Left cardiac atrium (tissue), 4 donors: ENCODE measurements at regions of chr15 and their contacts with region 1.

Region 1: DNA sequence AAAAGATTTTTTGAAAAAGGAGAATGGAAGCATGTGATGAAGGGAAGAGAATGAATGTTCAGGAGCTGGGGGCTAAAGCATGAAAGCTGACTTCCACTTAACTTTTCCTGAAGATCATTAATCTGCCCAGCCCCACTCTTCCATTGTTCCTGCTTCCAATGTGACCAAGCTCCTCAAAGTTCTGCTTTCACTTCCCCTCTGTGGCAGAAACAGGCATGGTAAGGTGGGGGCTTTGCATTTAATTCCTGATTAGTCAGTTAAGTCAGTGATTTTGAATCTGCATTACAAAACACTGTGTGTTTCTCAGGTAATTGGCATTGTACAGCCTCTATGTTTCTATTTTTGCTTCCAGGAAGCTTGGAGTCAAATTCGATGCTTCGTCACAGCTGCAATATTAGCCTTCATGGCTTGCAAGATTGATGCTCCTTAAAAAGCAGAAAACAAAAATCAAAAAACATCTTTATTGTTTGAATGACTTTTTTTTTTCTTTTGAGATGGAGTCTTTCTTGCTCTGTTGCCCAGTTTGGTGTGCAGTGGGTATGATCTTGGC is 7.3 kb upstream of the TM6SF1 start:
- DNase-seq: no peak
- ATAC-seq: peak in 1 of 2 donors; percentile 71

Region 2: DNA sequence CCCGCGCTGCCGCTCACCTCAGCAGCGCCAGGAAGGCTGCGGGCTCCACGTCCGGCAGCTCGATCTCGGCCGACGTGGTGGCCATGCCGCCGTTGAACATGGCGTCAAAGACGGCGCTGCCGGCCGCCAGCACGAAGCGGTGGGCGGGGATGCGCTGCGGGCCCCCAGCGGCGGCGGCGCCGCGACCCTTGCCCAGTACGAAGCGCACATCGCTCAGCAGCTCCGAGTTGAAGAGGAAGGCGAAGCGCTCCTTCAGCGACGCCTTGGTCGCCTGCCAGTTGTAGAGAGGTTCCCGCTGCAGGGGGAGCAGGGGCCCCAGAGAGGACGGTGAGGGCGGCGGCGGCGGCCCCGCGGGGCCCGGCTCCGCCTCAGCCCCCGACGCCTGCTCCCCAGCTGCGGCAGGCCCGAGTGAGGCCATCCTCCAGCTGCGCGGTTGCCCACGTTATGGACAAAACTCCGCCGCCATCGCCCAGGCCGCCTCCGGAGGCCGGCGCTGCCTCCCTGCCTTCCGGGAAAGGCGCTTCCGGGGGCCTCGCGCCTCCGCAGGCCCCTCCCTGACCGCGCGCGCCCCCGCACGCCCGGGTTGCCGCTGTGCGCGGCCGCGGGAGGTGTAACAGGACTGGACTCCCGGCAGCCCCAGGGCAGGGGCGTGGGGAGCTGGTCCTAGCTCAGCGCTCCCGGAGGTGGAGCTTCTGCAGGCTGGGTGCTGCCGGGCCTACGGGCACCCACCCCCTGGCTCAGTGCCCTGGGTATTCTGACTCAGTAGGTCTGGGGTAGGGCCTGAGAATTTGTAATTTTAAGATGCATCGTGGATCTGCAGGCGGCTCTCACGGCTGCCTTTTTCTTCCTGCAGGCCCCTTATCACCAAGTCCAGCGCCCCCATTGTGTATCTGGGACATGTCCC is 33.2 kb before region 1 on chr15 and contains the start of gene BTBD1:
- intact Hi-C with region 1: loop called in 1 of 2 experiments (anchors 5 kb)
- DNase-seq: peak; percentile 98
- ATAC-seq: peak; percentile 98 to 99
- total RNA-seq, gene BTBD1: 100 to 128 TPM

Region 3: GRCh38 chr15:83339396-83339795 is 239.2 kb after region 1 on chr15:
- intact Hi-C with region 1: no loop called
- DNase-seq: no peak
- ATAC-seq: no peak